Heart right ventricle (tissue), 16 donors: ENCODE measurements at regions of chr6 and their contacts with region 1.

Region 1: DNA sequence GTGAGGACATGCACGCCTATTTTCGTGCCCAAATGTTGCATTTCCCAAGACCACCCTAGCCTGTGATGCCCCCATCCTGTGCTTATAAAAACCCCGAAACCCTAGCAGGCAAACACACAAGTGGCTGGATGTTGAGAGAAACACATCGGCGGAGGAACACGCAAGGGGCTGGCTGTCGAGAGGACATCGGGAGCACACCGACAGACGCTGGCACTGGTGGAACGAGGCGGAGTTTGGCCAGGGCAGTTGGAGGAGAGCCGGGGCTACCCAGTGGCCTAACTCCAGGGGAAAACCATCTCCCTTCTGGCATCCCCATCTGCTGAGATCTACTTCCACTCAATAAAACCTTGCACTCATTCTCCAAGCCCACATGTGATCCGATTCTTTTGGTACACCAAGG is 225.9 kb upstream of the GRIK2 start:
- DNase-seq: no peak
- ATAC-seq: no peak
- H3K4me3 ChIP-seq: no peak overlapping the region
- H3K27ac ChIP-seq: no peak overlapping the region
- H3K4me1 ChIP-seq: no peaks in the 10 kb centered on the region
- H3K27me3 ChIP-seq: no peaks in the 10 kb centered on the region
- CTCF ChIP-seq: no peak

Region 2: GRCh38 chr6:101042966-101043365 is 124.7 kb before region 1 on chr6:
- intact Hi-C with region 1: no loop called
- DNase-seq: no peak
- ATAC-seq: no peak
- H3K4me3 ChIP-seq: no peak overlapping the region
- H3K27ac ChIP-seq: no peak overlapping the region
- H3K4me1 ChIP-seq: no peaks in the 10 kb centered on the region
- H3K27me3 ChIP-seq: no peaks in the 10 kb centered on the region
- CTCF ChIP-seq: no peak

Region 3: DNA sequence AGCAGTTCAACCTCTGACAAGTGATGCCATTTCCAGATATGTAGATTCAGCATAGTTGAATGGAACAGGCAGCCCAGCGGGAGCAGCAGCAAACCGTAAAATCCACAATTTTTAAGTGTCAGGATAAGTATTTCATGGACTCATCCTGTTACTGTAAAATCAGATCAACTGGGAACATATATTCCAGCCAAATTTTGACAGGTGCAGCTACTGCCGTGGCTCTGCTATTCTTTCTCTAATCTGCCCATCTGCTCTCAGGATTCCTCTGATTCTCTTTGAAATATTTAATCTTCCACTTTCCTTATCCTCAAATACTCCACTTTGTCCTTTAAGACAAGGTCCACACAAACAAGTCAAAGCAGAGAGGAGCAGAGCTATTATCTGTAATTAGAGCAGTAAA is 41.1 kb before region 1 on chr6:
- intact Hi-C with region 1: no loop called
- DNase-seq: no peak
- ATAC-seq: no peak
- H3K4me3 ChIP-seq: no peak overlapping the region
- H3K27ac ChIP-seq: no peak overlapping the region
- H3K4me1 ChIP-seq: no peaks in the 10 kb centered on the region
- H3K27me3 ChIP-seq: no peaks in the 10 kb centered on the region
- CTCF ChIP-seq: no peak

Region 4: GRCh38 chr6:101195588-101195987 is 27.9 kb after region 1 on chr6:
- intact Hi-C with region 1: loop called in 1 of 10 experiments (anchors 1 kb)
- DNase-seq: no peak
- ATAC-seq: no peak
- H3K4me3 ChIP-seq: no peak overlapping the region
- H3K27ac ChIP-seq: no peak overlapping the region
- H3K4me1 ChIP-seq: no peaks in the 10 kb centered on the region
- H3K27me3 ChIP-seq: no peaks in the 10 kb centered on the region
- CTCF ChIP-seq: no peak

Region 5: GRCh38 chr6:101683884-101684283 is 516.2 kb after region 1 on chr6:
- intact Hi-C with region 1: no loop called
- DNase-seq: no peak
- ATAC-seq: no peak
- H3K4me3 ChIP-seq: no peak overlapping the region
- H3K27ac ChIP-seq: no peak overlapping the region
- H3K4me1 ChIP-seq: no peaks in the 10 kb centered on the region
- H3K27me3 ChIP-seq: no peaks in the 10 kb centered on the region
- CTCF ChIP-seq: no peak